ENCODE measurements at regions of chr19 and their contacts with region 1.

Region 1: DNA sequence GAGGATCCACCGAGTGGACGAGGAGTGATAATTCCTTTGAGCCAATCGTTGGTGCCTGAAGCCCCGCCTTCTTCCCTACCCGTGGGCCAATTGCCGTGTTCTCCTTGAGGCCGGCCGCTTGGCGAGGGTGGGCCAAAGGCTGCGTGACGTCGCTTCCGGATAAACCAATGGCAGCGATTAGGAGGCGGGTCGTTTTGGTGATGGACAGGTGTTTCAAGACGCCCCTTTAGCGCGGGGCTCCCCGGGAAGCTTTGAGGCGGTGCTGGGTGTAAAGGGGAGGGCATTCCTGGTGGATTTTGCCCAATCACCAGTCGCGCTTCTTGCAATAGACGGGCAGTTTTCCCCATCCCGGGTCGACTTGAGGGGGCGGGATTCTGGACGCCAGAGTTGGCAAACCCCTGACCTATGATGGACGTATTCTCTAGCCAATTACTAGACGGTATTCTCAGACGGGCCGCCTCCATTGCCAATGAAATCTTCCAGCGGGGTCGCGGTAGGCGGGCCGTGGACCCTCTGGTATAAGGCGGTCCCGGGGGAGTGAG is 310 bp upstream of the PRMT1 start:
- DNase-seq: peak; percentile 100
- ATAC-seq: peak; percentile 79
- H3K4me3 Mint-ChIP-seq: peak overlapping the region; percentile 74
- H3K27ac Mint-ChIP-seq: peak overlapping the region; percentile 99
- H3K4me1 Mint-ChIP-seq: peaks cover 38% of the 10 kb centered on the region
- H3K27me3 Mint-ChIP-seq: no peaks in the 10 kb centered on the region

Region 2: GRCh38 chr19:49580264-49581006 is 96.3 kb before region 1 on chr19 and contains the start of gene NOSIP:
- CTCF ChIA-PET with region 1: interaction called, 14 read pairs
- DNase-seq: peak; percentile 98
- ATAC-seq: peak; percentile 98
- H3K4me3 Mint-ChIP-seq: peak within 1 kb of the TSS; percentile 92
- H3K27ac Mint-ChIP-seq: peak within 1 kb of the TSS; percentile 94
- H3K4me1 Mint-ChIP-seq: peaks cover 28% of the 10 kb centered on the region
- H3K27me3 Mint-ChIP-seq: no peaks in the 10 kb centered on the region
- total RNA-seq, gene NOSIP: 77.3 to 96.1 TPM

Region 3: DNA sequence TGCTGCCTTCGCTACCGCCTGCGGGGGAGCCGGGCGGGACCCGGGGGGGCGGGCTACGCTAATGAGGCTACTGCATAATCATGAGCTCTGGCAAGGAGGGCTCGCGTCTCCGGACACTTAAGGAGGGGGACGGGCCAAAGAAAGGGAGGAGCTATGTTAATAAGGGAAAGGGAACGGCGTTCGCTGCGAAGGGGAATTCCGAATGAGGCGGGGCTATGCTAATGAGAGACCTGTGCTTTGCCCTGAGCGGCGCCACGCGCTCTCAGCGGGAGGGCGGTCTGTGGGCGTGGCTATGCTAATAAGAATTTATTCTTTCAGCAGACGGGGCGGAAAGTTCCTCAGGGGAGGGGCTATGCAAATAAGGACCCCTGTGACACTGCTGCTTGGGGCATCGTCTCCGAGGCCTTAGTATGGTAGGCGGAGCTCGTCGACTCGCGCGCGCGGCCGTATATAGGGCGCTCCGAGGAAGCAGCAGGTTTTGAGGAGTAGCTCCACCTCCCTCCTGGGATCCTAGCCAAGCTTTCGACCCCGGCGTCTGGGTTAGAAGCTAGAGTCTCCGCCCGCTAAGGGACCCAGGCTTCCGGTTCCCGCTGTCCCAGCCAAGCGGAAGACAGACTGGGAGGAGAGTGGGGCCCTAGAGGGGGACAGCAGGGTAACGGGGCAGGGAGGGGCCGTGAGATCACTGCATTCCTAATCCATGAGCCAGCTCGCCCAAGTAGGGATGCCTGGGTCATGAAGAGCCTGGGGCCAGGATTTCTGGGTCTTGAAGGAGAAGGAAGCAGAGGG is 36.5 kb before region 1 on chr19 and contains the start of gene RRAS:
- CTCF ChIA-PET with region 1: interaction called, 54 read pairs
- DNase-seq: peak; percentile 100
- ATAC-seq: peak; percentile 75
- H3K4me3 Mint-ChIP-seq: peak within 1 kb of the TSS; percentile 93
- H3K27ac Mint-ChIP-seq: peak within 1 kb of the TSS; percentile 99
- H3K4me1 Mint-ChIP-seq: peaks cover 44% of the 10 kb centered on the region
- H3K27me3 Mint-ChIP-seq: peaks cover 6% of the 10 kb centered on the region
- total RNA-seq, gene RRAS: 6.6 to 9.6 TPM

Region 4: GRCh38 chr19:49665351-49666119 is 11.2 kb before region 1 on chr19 and contains the starts of genes BCL2L12 and IRF3:
- CTCF ChIA-PET with region 1: interaction called, 64 read pairs
- DNase-seq: peak; percentile 99
- ATAC-seq: peak; percentile 86
- H3K4me3 Mint-ChIP-seq: peak within 1 kb of the TSS; percentile 97
- H3K27ac Mint-ChIP-seq: peak within 1 kb of the TSS; percentile 92
- H3K4me1 Mint-ChIP-seq: peaks cover 34% of the 10 kb centered on the region
- H3K27me3 Mint-ChIP-seq: no peaks in the 10 kb centered on the region
- total RNA-seq, gene BCL2L12: 90.6 to 94.5 TPM
- total RNA-seq, gene IRF3: 159 to 170 TPM

Region 5: DNA sequence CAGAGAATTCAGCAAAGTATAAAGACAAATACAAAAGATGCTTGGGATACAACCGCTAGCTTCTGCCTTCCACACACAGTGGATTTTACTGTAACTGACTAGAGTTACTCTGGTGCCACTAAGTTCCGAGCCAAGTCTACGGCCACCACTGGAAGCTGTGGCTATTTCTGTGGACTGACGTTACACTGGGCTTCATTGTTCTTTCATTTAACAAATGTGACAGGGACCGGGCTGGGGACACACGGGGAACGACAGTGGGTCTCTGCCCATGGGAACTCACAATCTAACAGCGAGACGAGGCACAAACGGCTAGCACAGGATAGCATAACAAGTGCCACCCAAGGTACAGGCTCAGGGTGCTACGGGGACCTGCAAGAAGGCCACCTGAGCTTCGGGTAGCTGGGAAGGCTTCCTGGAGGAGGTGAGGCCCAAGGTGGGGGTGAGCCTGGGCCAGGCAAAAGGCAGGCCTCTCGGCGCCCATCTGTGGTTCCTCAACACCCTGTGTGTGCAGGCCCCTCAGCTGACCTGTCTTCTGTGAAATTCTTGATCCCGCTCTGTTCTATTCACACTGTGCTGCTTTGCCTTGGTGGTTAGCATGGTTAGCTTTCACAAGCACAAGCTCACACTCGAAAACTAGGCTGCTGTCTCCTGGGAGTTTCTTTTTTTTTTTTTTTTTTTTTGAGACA is 230.3 kb after region 1 on chr19:
- CTCF ChIA-PET with region 1: no interaction called
- DNase-seq: no peak
- ATAC-seq: no peak
- H3K4me3 Mint-ChIP-seq: no peak overlapping the region
- H3K27ac Mint-ChIP-seq: no peak overlapping the region
- H3K4me1 Mint-ChIP-seq: peaks cover 34% of the 10 kb centered on the region
- H3K27me3 Mint-ChIP-seq: no peaks in the 10 kb centered on the region